ENCODE measurements at regions of chr6 and their contacts with region 1.

Region 1: DNA sequence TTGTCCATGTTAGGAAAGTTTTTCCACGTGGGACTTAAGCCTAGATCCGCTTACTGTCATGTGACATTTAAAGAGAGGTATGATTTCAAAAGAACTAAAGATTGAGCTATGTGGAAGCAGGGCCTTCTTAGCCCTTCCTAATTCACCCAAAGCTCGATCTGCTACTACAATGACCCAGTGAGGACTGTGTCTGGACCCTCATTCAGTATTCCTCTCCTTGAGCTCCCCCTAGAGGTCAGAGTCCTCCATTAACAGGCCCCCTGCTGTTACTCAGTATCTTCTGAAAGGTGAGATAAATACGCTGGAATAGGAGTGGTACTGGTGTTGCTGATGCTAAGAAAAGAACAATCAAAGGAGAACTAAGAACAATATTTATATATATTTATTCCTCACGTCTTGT is 414.0 kb downstream of the GJA1 start:
- DNase-seq: peak; percentile 43
- H3K4me3 Mint-ChIP-seq: no peak overlapping the region
- H3K27ac Mint-ChIP-seq: no peak overlapping the region
- H3K4me1 Mint-ChIP-seq: peaks cover 7% of the 10 kb centered on the region
- H3K27me3 Mint-ChIP-seq: no peaks in the 10 kb centered on the region

Region 2: GRCh38 chr6:121430514-121431460 is 418.7 kb before region 1 on chr6:
- CTCF ChIA-PET with region 1: interaction called, 12 read pairs
- DNase-seq: no peak
- H3K4me3 Mint-ChIP-seq: no peak overlapping the region
- H3K27ac Mint-ChIP-seq: no peak overlapping the region
- H3K4me1 Mint-ChIP-seq: peaks cover 3% of the 10 kb centered on the region
- H3K27me3 Mint-ChIP-seq: peaks cover 9% of the 10 kb centered on the region

Measured in activated naive CD4-positive, alpha-beta T cell treated with anti-CD3 and anti-CD28 coated beads, Interleukin-2, amount 10 ng/mL, durations not matched to agents 7 days and 5 days (primary cell).